CD4-positive, alpha-beta T cell (primary cell): ENCODE measurements at regions of chr12 and their contacts with region 1.

Region 1: DNA sequence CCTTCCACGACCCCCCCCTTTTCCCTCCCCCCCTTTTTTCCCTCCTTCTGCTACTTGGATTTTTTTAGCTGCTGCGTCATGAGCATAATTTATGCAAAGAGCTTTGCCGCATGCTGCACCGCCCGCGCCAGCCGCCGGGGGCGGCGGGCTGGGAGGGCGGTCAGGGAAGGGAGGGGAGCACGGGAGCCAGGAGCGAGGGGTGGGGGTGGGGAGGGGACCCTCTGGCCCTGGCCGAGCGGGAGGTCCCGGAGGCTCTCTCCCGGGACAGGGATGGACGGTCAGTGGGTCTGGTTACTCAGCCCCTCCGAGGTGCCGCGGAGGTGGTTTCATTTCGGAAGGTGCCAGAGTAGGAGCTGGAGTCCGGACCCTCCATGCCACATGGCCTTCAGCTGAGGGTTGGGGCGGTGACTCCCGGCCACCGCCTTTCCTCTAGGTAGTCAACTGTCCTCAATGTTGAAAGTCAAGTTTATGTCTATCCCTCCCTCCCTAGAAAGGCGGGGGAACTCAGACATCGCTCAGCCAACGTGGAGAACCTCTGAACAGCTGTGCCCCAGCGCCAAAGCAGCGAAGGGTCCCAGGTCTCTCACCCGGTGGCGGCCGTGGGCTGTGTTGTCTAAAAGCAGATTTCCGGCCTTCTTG is at the start of gene POU6F1:
- DNase-seq: peak; percentile 53 to 90 (median 66)
- ATAC-seq: peak; percentile 83
- H3K4me3 ChIP-seq: peak within 1 kb of the TSS; percentile 98
- H3K4me3 Mint-ChIP-seq: peak within 1 kb of the TSS; percentile 94
- H3K27ac ChIP-seq: peak within 1 kb of the TSS; percentile 86 to 92
- H3K27ac Mint-ChIP-seq: peak within 1 kb of the TSS; percentile 98
- H3K4me1 ChIP-seq: peaks cover 16% of the 10 kb centered on the region
- H3K4me1 Mint-ChIP-seq: peaks cover 33% of the 10 kb centered on the region
- H3K27me3 ChIP-seq: no peaks in the 10 kb centered on the region
- H3K27me3 Mint-ChIP-seq: no peaks in the 10 kb centered on the region
- CTCF ChIP-seq: peak; percentile 60
- total RNA-seq, gene POU6F1: 31.7 to 36.8 TPM

Region 2: DNA sequence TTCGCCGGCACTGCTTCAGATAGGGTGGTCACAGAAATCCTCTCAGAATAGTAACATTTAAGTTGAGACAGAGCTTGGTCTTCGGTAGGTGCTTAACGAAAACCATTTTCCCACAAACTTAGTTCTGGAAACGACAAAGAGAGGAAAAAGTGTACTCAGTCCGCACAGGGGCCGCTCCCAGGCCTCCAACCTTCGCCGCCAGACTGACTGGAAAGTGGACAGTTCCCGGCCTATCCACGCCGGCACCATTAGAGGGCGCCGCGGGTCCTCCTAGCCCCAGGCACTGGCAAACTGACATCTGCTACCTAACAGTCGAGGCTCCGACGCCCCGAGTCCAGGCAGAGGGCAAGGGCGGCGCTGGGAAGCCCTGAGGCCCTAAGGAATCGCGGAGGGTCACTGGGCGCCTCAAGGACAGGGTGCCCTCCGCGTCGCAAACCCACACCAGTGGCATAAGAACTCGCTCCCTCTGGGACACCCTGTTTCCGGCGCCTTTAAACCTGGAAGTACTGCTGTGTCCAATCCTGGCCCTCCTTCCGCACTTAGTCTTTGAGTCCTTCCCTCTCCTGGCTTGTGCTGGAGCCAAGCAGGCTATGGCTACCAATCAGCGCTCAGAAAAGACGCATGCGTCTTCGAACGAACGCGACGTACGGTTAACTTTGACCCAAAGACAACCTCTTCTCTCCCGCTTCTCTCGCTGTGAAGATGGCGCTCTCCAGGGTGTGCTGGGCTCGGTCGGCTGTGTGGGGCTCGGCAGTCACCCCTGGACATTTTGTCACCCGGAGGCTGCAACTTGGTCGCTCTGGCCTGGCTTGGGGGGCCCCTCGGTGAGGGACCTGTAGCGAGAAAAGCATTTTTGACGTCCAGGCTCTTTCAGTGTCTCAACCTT is 170.2 kb before region 1 on chr12 and contains the start of gene LETMD1:
- CTCF ChIA-PET with region 1: no interaction called
- POLR2A ChIA-PET with region 1: interaction called, 7 read pairs
- intact Hi-C with region 1: loop called (anchors 1 to 5 kb)
- DNase-seq: peak; percentile 79 to 98 (median 87)
- ATAC-seq: peak; percentile 95
- H3K4me3 ChIP-seq: peak within 1 kb of the TSS; percentile 91
- H3K4me3 Mint-ChIP-seq: peak within 1 kb of the TSS; percentile 93
- H3K27ac ChIP-seq: peak within 1 kb of the TSS; percentile 83 to 94
- H3K27ac Mint-ChIP-seq: peak within 1 kb of the TSS; percentile 93
- H3K4me1 ChIP-seq: peaks cover 25% of the 10 kb centered on the region
- H3K4me1 Mint-ChIP-seq: peaks cover 39% of the 10 kb centered on the region
- H3K27me3 ChIP-seq: no peaks in the 10 kb centered on the region
- H3K27me3 Mint-ChIP-seq: no peaks in the 10 kb centered on the region
- CTCF ChIP-seq: peak; percentile 94
- total RNA-seq, gene LETMD1: 51.8 to 54.1 TPM

Region 3: GRCh38 chr12:51172515-51173431 is 45.3 kb before region 1 on chr12 and contains the start of gene TFCP2:
- CTCF ChIA-PET with region 1: interaction called, 7 read pairs
- POLR2A ChIA-PET with region 1: interaction called, 15 read pairs
- intact Hi-C with region 1: loop called (anchors 2 to 5 kb)
- DNase-seq: peak; percentile 85 to 98 (median 90)
- ATAC-seq: peak; percentile 98
- H3K4me3 ChIP-seq: peak within 1 kb of the TSS; percentile 91
- H3K4me3 Mint-ChIP-seq: peak within 1 kb of the TSS; percentile 87
- H3K27ac ChIP-seq: peak within 1 kb of the TSS; percentile 91 to 96
- H3K27ac Mint-ChIP-seq: no peak within 1 kb of the TSS
- H3K4me1 ChIP-seq: peaks cover 34% of the 10 kb centered on the region
- H3K4me1 Mint-ChIP-seq: peaks cover 18% of the 10 kb centered on the region
- H3K27me3 ChIP-seq: no peaks in the 10 kb centered on the region
- H3K27me3 Mint-ChIP-seq: no peaks in the 10 kb centered on the region
- CTCF ChIP-seq: no peak
- total RNA-seq, gene TFCP2: 9.4 to 11.7 TPM

Region 4: GRCh38 chr12:51192284-51192671 is 25.8 kb before region 1 on chr12:
- CTCF ChIA-PET with region 1: no interaction called
- POLR2A ChIA-PET with region 1: no interaction called
- intact Hi-C with region 1: no loop called
- DNase-seq: no peak
- ATAC-seq: no peak
- H3K4me3 ChIP-seq: no peak overlapping the region
- H3K4me3 Mint-ChIP-seq: no peak overlapping the region
- H3K27ac ChIP-seq: no peak overlapping the region
- H3K27ac Mint-ChIP-seq: no peak overlapping the region
- H3K4me1 ChIP-seq: no peaks in the 10 kb centered on the region
- H3K4me1 Mint-ChIP-seq: no peaks in the 10 kb centered on the region
- H3K27me3 ChIP-seq: no peaks in the 10 kb centered on the region
- H3K27me3 Mint-ChIP-seq: no peaks in the 10 kb centered on the region
- CTCF ChIP-seq: no peak

Region 5: GRCh38 chr12:51238510-51239334 is 20.6 kb after region 1 on chr12 and contains the start of gene DAZAP2:
- CTCF ChIA-PET with region 1: interaction called, 40 read pairs
- POLR2A ChIA-PET with region 1: interaction called, 221 read pairs
- intact Hi-C with region 1: loop called (anchors 1 kb)
- DNase-seq: peak; percentile 90 to 98 (median 95)
- ATAC-seq: peak; percentile 86
- H3K4me3 ChIP-seq: peak within 1 kb of the TSS; percentile 99
- H3K4me3 Mint-ChIP-seq: peak within 1 kb of the TSS; percentile 96
- H3K27ac ChIP-seq: peak within 1 kb of the TSS; percentile 100
- H3K27ac Mint-ChIP-seq: peak within 1 kb of the TSS; percentile 97
- H3K4me1 ChIP-seq: peaks cover 36% of the 10 kb centered on the region
- H3K4me1 Mint-ChIP-seq: peaks cover 61% of the 10 kb centered on the region
- H3K27me3 ChIP-seq: no peaks in the 10 kb centered on the region
- H3K27me3 Mint-ChIP-seq: no peaks in the 10 kb centered on the region
- CTCF ChIP-seq: peak; percentile 20
- total RNA-seq, gene DAZAP2: 292 to 310 TPM

Region 6: DNA sequence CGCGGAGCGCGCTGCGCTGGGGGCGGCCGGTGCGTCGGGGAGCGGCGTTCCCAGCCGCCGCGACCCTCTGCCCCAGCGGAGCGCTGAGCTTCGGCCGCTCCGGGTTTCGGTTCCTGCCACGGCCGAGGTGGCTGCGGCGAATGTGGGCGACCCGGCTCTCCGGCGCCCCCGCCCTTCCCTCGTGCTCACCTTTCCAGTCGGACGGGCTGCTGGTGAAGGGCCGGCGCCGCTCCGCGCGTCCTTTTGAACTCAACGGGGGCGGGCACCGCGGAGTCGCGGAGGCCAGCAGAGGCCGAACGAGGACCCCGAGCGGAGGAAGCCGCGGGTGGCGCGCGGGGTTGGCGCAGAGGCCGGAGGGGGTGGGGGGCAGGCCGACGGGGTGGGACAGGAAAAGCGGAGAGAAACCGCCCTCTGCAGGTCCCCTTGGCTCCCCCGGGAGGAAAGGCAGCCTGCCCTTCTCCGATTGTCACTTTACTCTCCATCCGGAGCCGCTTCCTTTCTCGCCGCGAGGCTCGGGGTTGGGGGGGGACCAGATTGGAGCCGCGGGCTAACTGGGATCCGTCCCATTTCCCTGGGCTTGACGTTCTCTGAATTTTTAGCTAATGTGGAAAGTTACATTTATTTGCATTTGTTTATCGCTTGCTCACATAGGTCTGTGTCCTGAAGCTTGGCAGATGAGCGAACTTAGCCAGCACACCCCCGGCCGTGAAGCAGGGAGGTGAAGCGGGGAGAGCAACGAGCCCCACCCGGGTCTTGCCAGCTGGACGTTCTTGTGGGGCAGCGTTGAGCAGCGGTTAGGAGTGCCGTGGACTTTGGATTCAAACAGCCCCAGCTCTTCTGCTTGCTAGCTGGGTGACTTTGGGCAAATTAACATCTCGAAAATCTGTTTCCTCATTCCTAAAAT is 52.2 kb after region 1 on chr12 and contains the start of gene SMAGP:
- CTCF ChIA-PET with region 1: interaction called, 4 read pairs
- POLR2A ChIA-PET with region 1: interaction called, 17 read pairs
- intact Hi-C with region 1: loop called in 1 of 2 experiments (anchors 10 kb)
- DNase-seq: peak in 13 of 14 experiments; percentile 14 to 70 (median 28)
- ATAC-seq: peak; percentile 44
- H3K4me3 ChIP-seq: peak within 1 kb of the TSS; percentile 72
- H3K4me3 Mint-ChIP-seq: peak within 1 kb of the TSS; percentile 95
- H3K27ac ChIP-seq: peak within 1 kb of the TSS in 1 of 2 donors; percentile 36
- H3K27ac Mint-ChIP-seq: peak within 1 kb of the TSS; percentile 71
- H3K4me1 ChIP-seq: peaks cover 21% of the 10 kb centered on the region
- H3K4me1 Mint-ChIP-seq: peaks cover 32% of the 10 kb centered on the region
- H3K27me3 ChIP-seq: no peaks in the 10 kb centered on the region
- H3K27me3 Mint-ChIP-seq: no peaks in the 10 kb centered on the region
- CTCF ChIP-seq: no peak
- total RNA-seq, gene SMAGP: 2.5 to 3.0 TPM

Region 7: DNA sequence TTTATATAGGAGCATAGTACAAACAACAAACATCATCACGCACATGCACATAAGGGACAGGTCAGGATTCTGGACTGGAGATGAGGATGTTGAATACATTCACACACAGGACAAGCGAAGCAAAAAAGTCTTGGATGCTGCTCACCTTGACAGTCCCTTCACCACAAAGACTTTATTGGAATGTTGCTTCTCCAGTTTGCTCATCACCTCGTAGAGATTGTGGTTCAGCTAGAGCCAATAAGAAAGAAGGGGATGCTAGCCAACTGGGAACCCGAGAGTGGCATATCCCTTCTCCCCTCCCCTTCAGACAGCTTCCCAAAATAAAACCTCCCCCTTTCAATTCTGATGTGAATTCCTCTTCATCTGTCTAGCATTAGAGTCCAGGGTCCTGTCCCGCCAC is 77.6 kb after region 1 on chr12:
- CTCF ChIA-PET with region 1: no interaction called
- POLR2A ChIA-PET with region 1: no interaction called
- intact Hi-C with region 1: no loop called
- DNase-seq: no peak
- ATAC-seq: no peak
- H3K4me3 ChIP-seq: no peak overlapping the region
- H3K4me3 Mint-ChIP-seq: no peak overlapping the region
- H3K27ac ChIP-seq: no peak overlapping the region
- H3K27ac Mint-ChIP-seq: peak overlapping the region; percentile 31
- H3K4me1 ChIP-seq: no peaks in the 10 kb centered on the region
- H3K4me1 Mint-ChIP-seq: peaks cover 17% of the 10 kb centered on the region
- H3K27me3 ChIP-seq: no peaks in the 10 kb centered on the region
- H3K27me3 Mint-ChIP-seq: no peaks in the 10 kb centered on the region
- CTCF ChIP-seq: no peak

Region 8: DNA sequence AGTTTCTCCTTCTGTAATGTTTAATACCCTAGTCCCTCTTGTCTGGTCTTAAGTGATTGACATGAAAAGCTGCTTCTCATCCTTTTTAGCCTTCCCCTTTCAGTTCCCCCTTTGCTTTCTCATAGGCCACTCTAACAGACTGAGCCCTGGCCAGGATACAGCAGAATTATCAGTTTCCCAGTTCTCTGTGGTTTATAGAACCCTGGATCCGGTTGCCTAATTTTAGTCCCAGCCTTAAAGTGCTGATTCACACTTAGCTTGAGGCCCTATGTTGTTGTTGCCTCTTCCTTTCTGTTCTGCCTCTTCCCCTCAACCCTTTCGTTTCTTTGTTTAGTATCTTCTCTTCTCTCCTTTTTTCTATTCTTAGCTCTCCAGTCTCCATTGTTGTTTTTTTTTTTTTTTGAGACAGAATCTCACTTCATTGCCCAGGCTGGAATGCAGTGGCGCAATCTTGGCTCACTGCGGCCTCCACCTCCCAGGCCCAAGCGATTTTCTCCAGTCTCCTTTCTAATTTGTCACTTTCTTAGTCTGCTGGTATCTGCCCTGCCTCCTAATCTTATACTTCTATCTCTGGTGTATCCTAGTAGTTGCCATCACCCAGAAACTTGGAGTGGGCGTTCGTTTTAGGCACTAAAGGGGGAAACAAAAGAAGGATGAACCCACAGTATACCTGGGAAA is 108.8 kb after region 1 on chr12:
- CTCF ChIA-PET with region 1: interaction called, 3 read pairs
- POLR2A ChIA-PET with region 1: interaction called, 11 read pairs
- intact Hi-C with region 1: no loop called
- DNase-seq: peak in 4 of 14 experiments; percentile 12 to 67 (median 42)
- ATAC-seq: no peak
- H3K4me3 ChIP-seq: no peak overlapping the region
- H3K4me3 Mint-ChIP-seq: peak overlapping the region; percentile 62
- H3K27ac ChIP-seq: peak overlapping the region; percentile 25 to 48
- H3K27ac Mint-ChIP-seq: peak overlapping the region; percentile 87
- H3K4me1 ChIP-seq: peaks cover 73% of the 10 kb centered on the region
- H3K4me1 Mint-ChIP-seq: peaks cover 79% of the 10 kb centered on the region
- H3K27me3 ChIP-seq: no peaks in the 10 kb centered on the region
- H3K27me3 Mint-ChIP-seq: no peaks in the 10 kb centered on the region
- CTCF ChIP-seq: no peak